ENCODE measurements at regions of chr1 and their contacts with region 1.

Region 1: GRCh38 chr1:160261893-160262794 is at the start of gene DCAF8:
- DNase-seq: peak; percentile 94
- ATAC-seq: peak; percentile 94
- H3K4me3 ChIP-seq: peak within 1 kb of the TSS; percentile 79 to 100 (median 100)
- H3K27ac ChIP-seq: peak within 1 kb of the TSS; percentile 95
- H3K4me1 ChIP-seq: peaks cover 49% of the 10 kb centered on the region
- H3K27me3 ChIP-seq: no peaks in the 10 kb centered on the region; a peak in 1 of 5 replicates
- CTCF ChIP-seq: peak; percentile 15; the same call in 1 of the 2 replicates
- EP300 ChIP-seq: 0 out of 4 replicates have a peak, but pooled peaks of 1 of the 2 experiments have one; percentile 7
- POLR2A ChIP-seq: peak; percentile 92 to 94
- RAD21 ChIP-seq: peak; percentile 33; the same call in 1 of the 2 replicates
- total RNA-seq, gene DCAF8: 52.3 and 79.8 TPM in 2 replicates

Region 2: DNA sequence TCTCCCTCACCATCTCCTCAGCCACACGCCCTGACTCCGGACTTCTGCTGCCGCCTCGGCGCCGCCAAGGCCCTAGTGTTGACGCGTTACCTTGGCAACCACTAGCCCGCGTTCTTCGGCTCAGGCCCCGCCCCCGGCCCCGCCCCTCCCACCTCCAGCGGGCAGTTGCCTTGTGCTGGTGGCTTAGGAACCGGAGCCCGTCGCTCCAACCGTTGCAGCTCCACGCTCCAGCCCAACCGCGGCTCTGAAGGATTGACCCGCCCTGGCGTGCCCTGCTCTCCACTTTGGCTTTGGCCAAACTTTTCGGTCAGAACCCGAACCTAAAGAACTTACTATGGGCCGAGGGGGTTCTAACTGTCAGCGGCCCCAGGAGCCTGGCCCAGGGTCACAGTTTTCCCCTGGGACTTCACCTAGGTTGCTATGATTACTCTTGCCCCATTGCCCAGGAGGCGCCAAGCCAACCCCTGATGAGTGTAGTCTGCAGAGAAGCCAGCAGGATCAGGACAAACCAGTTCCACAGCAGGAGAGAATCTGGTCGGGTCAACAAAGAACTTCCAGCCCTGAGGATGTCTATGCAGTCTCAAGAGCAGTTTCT is 362.0 kb before region 1 on chr1 and contains the start of gene CFAP45:
- CTCF ChIA-PET with region 1: no interaction called
- POLR2A ChIA-PET with region 1: no interaction called
- in situ Hi-C with region 1: no loop called
- intact Hi-C with region 1: no loop called
- DNase-seq: no peak
- ATAC-seq: no peak
- H3K4me3 ChIP-seq: no peak within 1 kb of the TSS
- H3K27ac ChIP-seq: no peak within 1 kb of the TSS
- H3K4me1 ChIP-seq: no peaks in the 10 kb centered on the region
- H3K27me3 ChIP-seq: peaks cover 0 to 1% of the 10 kb centered on the region in 2 experiments; a peak in 2 of 5 replicates
- CTCF ChIP-seq: no peak
- EP300 ChIP-seq: no peak
- POLR2A ChIP-seq: no peak
- RAD21 ChIP-seq: no peak
- total RNA-seq, gene CFAP45: not detected in 2 replicates

Region 3: GRCh38 chr1:160144921-160145320 is 117.2 kb before region 1 on chr1:
- CTCF ChIA-PET with region 1: no interaction called
- POLR2A ChIA-PET with region 1: no interaction called
- in situ Hi-C with region 1: no loop called
- intact Hi-C with region 1: no loop called
- DNase-seq: no peak
- ATAC-seq: no peak
- H3K4me3 ChIP-seq: no peak overlapping the region
- H3K27ac ChIP-seq: no peak overlapping the region
- H3K4me1 ChIP-seq: peaks cover 25% of the 10 kb centered on the region
- H3K27me3 ChIP-seq: peaks cover 0 to 4% of the 10 kb centered on the region in 2 experiments; a peak in 2 of 5 replicates
- CTCF ChIP-seq: no peak
- EP300 ChIP-seq: no peak
- POLR2A ChIP-seq: no peak
- RAD21 ChIP-seq: no peak

Region 4: GRCh38 chr1:160284782-160285344 is 22.7 kb after region 1 on chr1 and contains the start of gene PEX19:
- CTCF ChIA-PET with region 1: no interaction called
- POLR2A ChIA-PET with region 1: interaction called, 31 read pairs
- in situ Hi-C with region 1: no loop called
- intact Hi-C with region 1: loop called (anchors 2 kb)
- DNase-seq: peak; percentile 85
- ATAC-seq: peak; percentile 97
- H3K4me3 ChIP-seq: peak within 1 kb of the TSS; percentile 70 to 82 (median 75)
- H3K27ac ChIP-seq: peak within 1 kb of the TSS; percentile 70
- H3K4me1 ChIP-seq: peaks cover 17% of the 10 kb centered on the region
- H3K27me3 ChIP-seq: no peaks in the 10 kb centered on the region; a peak in 1 of 5 replicates
- CTCF ChIP-seq: no peak
- EP300 ChIP-seq: no peak
- POLR2A ChIP-seq: peak; percentile 69 to 86; a peak in 3 of 4 replicates
- RAD21 ChIP-seq: no peak
- total RNA-seq, gene PEX19: 47.0 and 81.9 TPM in 2 replicates

Measured in HepG2 (cell line).